Breast epithelium (tissue), 4 donors: ENCODE measurements at regions of chr1 and their contacts with region 1.

Region 1: GRCh38 chr1:17596651-17597509 is 57.4 kb downstream of the ARHGEF10L start:
- DNase-seq: no peak
- H3K4me3 ChIP-seq: no peak overlapping the region
- H3K27ac ChIP-seq: no peak overlapping the region
- H3K4me1 ChIP-seq: no peaks in the 10 kb centered on the region
- H3K27me3 ChIP-seq: no peaks in the 10 kb centered on the region
- CTCF ChIP-seq: no peak
- POLR2A ChIP-seq: no peak

Region 2: DNA sequence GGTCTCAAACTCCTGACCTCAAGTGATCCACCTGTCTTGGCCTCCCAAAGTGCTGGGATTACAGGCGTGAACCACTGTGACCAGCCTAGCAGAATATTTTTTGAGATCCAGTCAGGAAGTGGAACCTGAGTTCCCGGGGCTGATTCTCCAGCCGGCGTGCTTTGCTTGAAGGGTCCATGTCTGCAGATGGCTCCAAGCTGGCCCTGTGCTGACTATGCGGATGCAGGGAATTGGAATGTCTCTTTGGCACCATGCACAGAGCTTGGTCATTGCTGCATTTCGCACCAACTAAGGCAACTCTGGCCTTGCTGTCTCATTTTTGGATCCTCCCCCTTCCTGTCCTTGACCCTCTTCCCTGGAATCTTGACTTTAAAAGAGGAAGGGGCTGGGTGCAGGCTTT is 29.3 kb before region 1 on chr1:
- intact Hi-C with region 1: loop called (anchors 1 kb)
- DNase-seq: no peak
- H3K4me3 ChIP-seq: no peak overlapping the region
- H3K27ac ChIP-seq: peak overlapping the region; percentile 95 to 97
- H3K4me1 ChIP-seq: peaks cover 11 to 29% of the 10 kb centered on the region in 2 donors
- H3K27me3 ChIP-seq: no peaks in the 10 kb centered on the region
- CTCF ChIP-seq: no peak
- POLR2A ChIP-seq: no peak

Region 3: GRCh38 chr1:17611975-17612374 is 15.1 kb after region 1 on chr1:
- intact Hi-C with region 1: no loop called
- DNase-seq: no peak
- H3K4me3 ChIP-seq: no peak overlapping the region
- H3K27ac ChIP-seq: no peak overlapping the region
- H3K4me1 ChIP-seq: no peaks in the 10 kb centered on the region
- H3K27me3 ChIP-seq: no peaks in the 10 kb centered on the region
- CTCF ChIP-seq: no peak
- POLR2A ChIP-seq: no peak